PC-9 (cell line): ENCODE measurements at regions of chr20 and their contacts with region 1.

Region 1: GRCh38 chr20:24134284-24134683 is 145.7 kb upstream of the GGTLC1 start:
- DNase-seq: peak; percentile 77 to 94
- H3K4me3 ChIP-seq: peak overlapping the region; percentile 2; the same call in 1 of the 2 replicates
- H3K27ac ChIP-seq: peak overlapping the region; percentile 97
- H3K4me1 ChIP-seq: peaks cover 96% of the 10 kb centered on the region
- H3K27me3 ChIP-seq: no peaks in the 10 kb centered on the region
- CTCF ChIP-seq: no peak

Region 2: GRCh38 chr20:23889775-23890211 is 244.5 kb before region 1 on chr20:
- CTCF ChIA-PET with region 1: no interaction called
- POLR2A ChIA-PET with region 1: no interaction called
- intact Hi-C with region 1: no loop called
- DNase-seq: peak; percentile 63 to 83
- H3K4me3 ChIP-seq: no peak overlapping the region; the same call in 1 of the 2 replicates
- H3K27ac ChIP-seq: no peak overlapping the region
- H3K4me1 ChIP-seq: peaks cover 14% of the 10 kb centered on the region
- H3K27me3 ChIP-seq: no peaks in the 10 kb centered on the region
- CTCF ChIP-seq: peak; percentile 96

Region 3: GRCh38 chr20:24018796-24019195 is 115.5 kb before region 1 on chr20:
- CTCF ChIA-PET with region 1: no interaction called
- POLR2A ChIA-PET with region 1: no interaction called
- intact Hi-C with region 1: no loop called
- DNase-seq: peak; percentile 63 to 67
- H3K4me3 ChIP-seq: no peak overlapping the region
- H3K27ac ChIP-seq: no peak overlapping the region
- H3K4me1 ChIP-seq: peaks cover 15% of the 10 kb centered on the region
- H3K27me3 ChIP-seq: no peaks in the 10 kb centered on the region
- CTCF ChIP-seq: no peak

Region 4: GRCh38 chr20:24034820-24035219 is 99.5 kb before region 1 on chr20:
- CTCF ChIA-PET with region 1: no interaction called
- POLR2A ChIA-PET with region 1: no interaction called
- intact Hi-C with region 1: loop called (anchors 1 kb)
- DNase-seq: peak; percentile 89 to 98
- H3K4me3 ChIP-seq: no peak overlapping the region
- H3K27ac ChIP-seq: peak overlapping the region; percentile 52
- H3K4me1 ChIP-seq: peaks cover 41% of the 10 kb centered on the region
- H3K27me3 ChIP-seq: no peaks in the 10 kb centered on the region
- CTCF ChIP-seq: no peak

Region 5: GRCh38 chr20:24672886-24673677 is 538.8 kb after region 1 on chr20:
- CTCF ChIA-PET with region 1: no interaction called
- POLR2A ChIA-PET with region 1: no interaction called
- intact Hi-C with region 1: loop called (anchors 5 kb)
- DNase-seq: peak; percentile 64 to 92
- H3K4me3 ChIP-seq: no peak overlapping the region
- H3K27ac ChIP-seq: peak overlapping the region; percentile 64
- H3K4me1 ChIP-seq: peaks cover 23% of the 10 kb centered on the region
- H3K27me3 ChIP-seq: no peaks in the 10 kb centered on the region
- CTCF ChIP-seq: no peak